A673 (cell line): ENCODE measurements at regions of chr20 and their contacts with region 1.

Region 1: GRCh38 chr20:15059438-15059837 is 722.0 kb upstream of the FLRT3 start:
- DNase-seq: no peak
- H3K4me3 ChIP-seq: no peak overlapping the region
- H3K27ac ChIP-seq: no peak overlapping the region
- H3K4me1 ChIP-seq: no peaks in the 10 kb centered on the region
- H3K27me3 ChIP-seq: no peaks in the 10 kb centered on the region
- CTCF ChIP-seq: no peak

Region 2: DNA sequence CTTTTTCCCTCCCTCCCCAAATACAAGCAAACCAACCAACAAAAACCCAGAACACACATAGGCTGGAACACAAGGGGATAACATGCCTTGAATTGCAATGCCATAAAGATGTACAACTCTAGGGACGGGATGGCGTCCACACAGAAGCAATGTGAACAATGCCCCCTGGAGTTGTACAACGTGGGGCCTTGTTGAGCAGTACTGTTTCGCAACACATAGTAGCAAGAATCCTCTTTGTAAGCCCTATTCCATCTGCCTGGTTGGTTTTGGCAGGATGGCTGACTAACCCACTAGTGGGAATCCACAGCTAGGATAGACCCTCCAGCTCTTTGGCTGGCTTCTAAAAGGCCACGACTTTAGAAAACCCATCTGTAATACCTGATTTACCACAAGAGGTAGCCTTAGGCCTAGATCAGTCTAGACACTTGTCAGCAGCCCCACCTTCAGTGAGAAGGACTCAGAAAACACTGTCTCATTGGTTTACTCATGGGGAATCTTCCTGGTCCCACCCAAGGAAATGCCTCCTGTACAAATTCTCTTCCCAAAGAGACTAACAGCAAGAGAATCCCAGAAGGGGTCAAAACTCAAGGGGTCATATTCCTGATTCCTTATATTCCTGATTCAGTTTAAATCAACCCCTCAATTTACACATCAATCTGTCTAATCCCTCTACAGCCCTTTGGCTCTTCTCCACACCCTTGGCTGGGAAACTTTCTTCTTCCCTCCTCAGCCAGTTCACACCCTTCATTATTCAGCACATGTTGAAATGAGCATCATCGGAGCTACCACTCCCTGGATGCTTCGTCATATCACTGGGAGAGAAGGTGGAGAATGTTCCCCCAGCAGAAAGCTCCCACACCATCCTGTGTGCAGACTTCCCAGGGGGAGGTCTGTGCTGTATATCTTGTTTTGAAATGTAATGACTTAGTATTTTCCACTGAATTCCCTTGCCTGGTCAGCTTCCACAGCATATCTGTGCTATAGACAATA is 99.6 kb before region 1 on chr20:
- CTCF ChIA-PET with region 1: no interaction called
- POLR2A ChIA-PET with region 1: no interaction called
- intact Hi-C with region 1: loop called (anchors 5 kb)
- DNase-seq: no peak
- H3K4me3 ChIP-seq: no peak overlapping the region
- H3K27ac ChIP-seq: no peak overlapping the region
- H3K4me1 ChIP-seq: no peaks in the 10 kb centered on the region
- H3K27me3 ChIP-seq: no peaks in the 10 kb centered on the region
- CTCF ChIP-seq: no peak

Region 3: DNA sequence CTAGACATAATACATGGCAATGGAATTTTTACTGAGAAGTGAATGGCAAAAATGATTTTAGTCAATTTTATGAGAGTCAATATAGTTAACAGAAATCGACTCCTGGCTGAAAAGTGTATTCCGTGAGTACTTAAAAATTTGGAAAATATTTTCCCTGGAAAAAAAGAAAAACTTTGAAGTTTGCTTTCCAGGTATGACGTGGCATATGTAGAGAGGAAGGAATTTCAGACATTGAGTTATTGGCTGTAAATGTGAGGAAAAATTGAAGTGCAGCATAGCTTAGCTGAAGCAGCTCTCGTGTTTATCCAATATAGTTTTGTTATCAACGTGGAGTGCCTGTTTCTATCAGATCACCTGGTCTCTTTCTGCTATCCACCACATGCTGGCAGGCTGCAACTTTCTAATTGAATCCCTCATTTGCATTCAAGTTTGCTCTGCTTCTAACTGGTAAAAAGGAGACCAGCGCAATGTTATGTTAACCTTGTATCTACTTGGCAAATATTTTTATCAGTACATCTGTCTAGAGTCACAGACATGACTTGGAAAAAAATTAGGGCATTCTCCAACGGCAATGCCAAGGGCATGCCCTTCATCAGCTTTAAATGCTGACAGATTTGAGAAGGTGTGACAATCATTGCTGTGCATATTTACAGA is 380.7 kb after region 1 on chr20:
- CTCF ChIA-PET with region 1: no interaction called
- POLR2A ChIA-PET with region 1: no interaction called
- intact Hi-C with region 1: no loop called
- DNase-seq: no peak
- H3K4me3 ChIP-seq: no peak overlapping the region
- H3K27ac ChIP-seq: no peak overlapping the region
- H3K4me1 ChIP-seq: no peaks in the 10 kb centered on the region
- H3K27me3 ChIP-seq: no peaks in the 10 kb centered on the region
- CTCF ChIP-seq: no peak